ENCODE measurements at regions of chr17 and their contacts with region 1.

Region 1: GRCh38 chr17:14069251-14070021 is at the start of gene COX10:
- DNase-seq: peak; percentile 96
- ATAC-seq: peak; percentile 97
- H3K4me3 ChIP-seq: peak within 1 kb of the TSS; percentile 99
- H3K27ac ChIP-seq: peak within 1 kb of the TSS; percentile 74
- H3K4me1 ChIP-seq: peaks cover 32% of the 10 kb centered on the region
- H3K27me3 ChIP-seq: no peaks in the 10 kb centered on the region
- CTCF ChIP-seq: no peak
- total RNA-seq, gene COX10: 28.3 and 34.7 TPM in 2 replicates

Region 2: GRCh38 chr17:13594762-13595598 is 474.5 kb before region 1 on chr17:
- CTCF ChIA-PET with region 1: no interaction called
- POLR2A ChIA-PET with region 1: no interaction called
- intact Hi-C with region 1: loop called (anchors 10 kb)
- DNase-seq: peak; percentile 92
- ATAC-seq: peak; percentile 35; the same call in 1 of the 2 replicates
- H3K4me3 ChIP-seq: peak overlapping the region; percentile 44
- H3K27ac ChIP-seq: no peak overlapping the region
- H3K4me1 ChIP-seq: peaks cover 37% of the 10 kb centered on the region
- H3K27me3 ChIP-seq: 0 out of 2 replicates have a peak, but pooled peaks cover 5% of the 10 kb centered on the region
- CTCF ChIP-seq: peak; percentile 98

Region 3: GRCh38 chr17:14203388-14203787 is 134.0 kb after region 1 on chr17:
- CTCF ChIA-PET with region 1: no interaction called
- POLR2A ChIA-PET with region 1: no interaction called
- intact Hi-C with region 1: loop called (anchors 10 kb)
- DNase-seq: peak; percentile 26
- ATAC-seq: no peak
- H3K4me3 ChIP-seq: no peak overlapping the region
- H3K27ac ChIP-seq: no peak overlapping the region
- H3K4me1 ChIP-seq: peaks cover 16% of the 10 kb centered on the region
- H3K27me3 ChIP-seq: no peaks in the 10 kb centered on the region
- CTCF ChIP-seq: peak; percentile 52

Region 4: GRCh38 chr17:14300575-14301278 is 231.3 kb after region 1 on chr17 and contains the start of gene HS3ST3B1:
- CTCF ChIA-PET with region 1: no interaction called
- POLR2A ChIA-PET with region 1: no interaction called
- intact Hi-C with region 1: loop called (anchors 10 kb)
- DNase-seq: peak; percentile 99
- ATAC-seq: peak; percentile 80
- H3K4me3 ChIP-seq: peak within 1 kb of the TSS; percentile 65
- H3K27ac ChIP-seq: no peak within 1 kb of the TSS
- H3K4me1 ChIP-seq: peaks cover 43% of the 10 kb centered on the region
- H3K27me3 ChIP-seq: peaks cover 93% of the 10 kb centered on the region
- CTCF ChIP-seq: no peak
- total RNA-seq, gene HS3ST3B1: 0.33 and 0.52 TPM in 2 replicates

Measured in PC-3 (cell line).